Astrocyte of the cerebellum (primary cell): ENCODE measurements at regions of chr11 and their contacts with region 1.

Region 1: GRCh38 chr11:113334183-113334582 is 19.8 kb downstream of the TTC12 start:
- DNase-seq: no peak
- H3K4me3 ChIP-seq: no peak overlapping the region
- CTCF ChIP-seq: no peak

Region 2: GRCh38 chr11:113417428-113417827 is 83.2 kb after region 1 on chr11:
- in situ Hi-C with region 1: loop called (anchors 5 kb)
- DNase-seq: no peak
- H3K4me3 ChIP-seq: no peak overlapping the region
- CTCF ChIP-seq: no peak

Region 3: DNA sequence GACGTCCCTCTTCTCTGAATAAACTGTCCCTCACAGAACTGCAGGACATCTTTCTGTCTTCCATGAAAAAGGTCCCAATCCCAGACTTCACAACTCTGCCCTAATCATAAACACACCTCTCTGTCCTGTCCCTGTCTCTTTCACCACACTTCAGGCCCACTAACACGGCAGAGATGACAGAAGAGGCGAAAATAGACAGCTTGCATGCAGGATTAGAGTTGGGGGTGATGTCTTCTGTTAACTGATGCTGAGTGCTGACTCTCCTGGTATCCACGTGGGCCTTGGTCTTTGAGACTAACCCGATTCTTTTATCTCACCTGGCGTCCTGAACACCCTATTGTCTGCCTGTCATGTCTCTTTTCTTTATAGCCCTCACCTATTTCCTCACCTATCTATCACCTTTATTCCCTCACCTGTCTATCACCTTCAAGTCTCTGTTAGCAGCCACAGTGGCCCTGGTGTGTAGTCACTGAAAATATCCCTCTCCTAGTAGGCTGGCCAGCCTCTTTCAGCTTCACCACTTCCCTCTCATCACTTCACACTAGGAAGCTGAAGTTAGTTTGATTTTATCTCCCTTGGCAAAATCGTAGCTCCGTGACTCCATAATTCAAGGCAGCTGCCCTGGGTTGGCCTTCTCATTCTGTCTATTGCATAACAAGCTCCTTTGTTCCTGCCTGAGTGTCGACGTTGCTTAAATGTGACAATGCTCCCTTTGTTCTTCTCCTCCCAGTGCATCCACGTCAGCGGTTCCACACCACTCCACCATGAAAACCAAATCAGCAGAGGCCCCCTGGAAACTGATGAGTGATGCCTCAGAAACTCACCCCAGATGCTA is 171.6 kb after region 1 on chr11:
- in situ Hi-C with region 1: loop called (anchors 25 kb)
- DNase-seq: peak; percentile 48
- H3K4me3 ChIP-seq: no peak overlapping the region
- CTCF ChIP-seq: no peak

Region 4: DNA sequence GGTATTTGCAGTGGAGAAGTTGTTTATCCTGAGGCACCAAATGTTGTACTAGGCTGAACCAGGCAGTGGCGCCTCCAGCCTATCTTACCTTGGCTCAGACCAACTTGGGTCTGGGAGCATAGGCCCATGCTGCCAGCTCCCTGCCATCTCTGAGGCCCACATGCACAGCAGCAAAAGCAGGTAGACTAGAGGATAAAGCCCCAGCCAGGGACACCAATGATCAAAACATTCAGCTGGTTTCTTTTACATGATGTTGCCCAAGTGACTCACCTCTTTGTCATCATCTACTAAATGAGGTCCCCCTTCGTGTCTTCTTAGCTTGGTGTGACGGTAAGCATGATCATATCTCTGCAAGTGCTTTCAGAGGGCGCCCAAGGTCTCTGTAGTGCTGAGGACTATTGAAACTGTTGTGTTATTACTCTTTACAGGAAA is 253.1 kb after region 1 on chr11:
- in situ Hi-C with region 1: no loop called
- DNase-seq: no peak
- H3K4me3 ChIP-seq: no peak overlapping the region
- CTCF ChIP-seq: no peak